ENCODE measurements at regions of chr22 and their contacts with region 1.

Region 1: DNA sequence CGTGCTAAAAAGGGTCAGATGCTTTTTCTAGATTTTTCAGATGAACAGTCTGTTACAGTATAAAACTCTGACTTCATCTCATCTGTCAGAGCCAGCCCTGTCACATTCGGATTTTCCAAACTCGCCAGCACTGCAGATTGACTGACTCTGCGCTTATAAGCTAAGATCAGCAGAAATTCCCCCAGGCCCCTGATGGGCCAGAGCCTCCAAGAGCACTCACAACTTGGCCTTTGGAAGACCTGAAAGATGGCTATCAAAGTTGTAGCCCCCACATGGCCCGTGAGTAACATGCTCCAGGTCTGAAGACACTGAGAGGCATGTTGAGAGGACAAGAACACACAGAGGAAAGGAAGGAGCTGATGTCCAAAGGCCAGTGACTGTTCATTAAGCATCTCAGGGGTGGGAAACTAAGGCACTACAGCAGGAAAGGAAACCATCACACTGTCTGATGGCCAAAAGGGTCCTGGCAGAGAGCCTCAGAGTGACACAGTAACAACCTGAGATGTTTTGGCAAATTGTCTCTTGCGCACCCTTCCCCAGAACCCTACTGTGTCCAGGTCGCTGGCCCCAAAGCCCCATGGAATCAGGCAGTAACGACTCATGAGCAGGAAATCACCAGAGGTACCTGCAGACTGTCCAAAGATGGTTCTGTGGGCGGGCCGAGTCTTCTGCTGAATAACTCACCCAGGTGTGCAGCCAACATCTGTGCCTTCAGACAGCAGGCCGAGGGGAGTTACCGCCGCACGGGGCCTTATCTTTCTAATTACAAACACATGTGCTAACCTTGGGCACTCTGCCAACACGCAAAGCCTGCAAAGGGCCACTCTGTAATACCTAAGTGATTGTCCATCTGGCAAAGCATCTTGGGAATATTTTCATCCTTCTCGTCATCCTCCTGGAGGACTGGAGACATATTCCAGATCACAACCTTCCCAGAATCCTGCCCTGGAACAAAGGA is 23.6 kb downstream of the HIRA start:
- DNase-seq: no peak
- H3K4me3 ChIP-seq: no peak overlapping the region
- H3K27ac ChIP-seq: no peak overlapping the region
- H3K4me1 ChIP-seq: no peaks in the 10 kb centered on the region
- H3K27me3 ChIP-seq: no peaks in the 10 kb centered on the region
- CTCF ChIP-seq: no peak

Region 2: GRCh38 chr22:19341500-19341899 is 66.4 kb before region 1 on chr22:
- CTCF ChIA-PET with region 1: no interaction called
- POLR2A ChIA-PET with region 1: no interaction called
- intact Hi-C with region 1: loop called (anchors 10 kb)
- DNase-seq: no peak
- H3K4me3 ChIP-seq: no peak overlapping the region
- H3K27ac ChIP-seq: no peak overlapping the region
- H3K4me1 ChIP-seq: no peaks in the 10 kb centered on the region
- H3K27me3 ChIP-seq: no peaks in the 10 kb centered on the region
- CTCF ChIP-seq: no peak

Measured in PC-9 (cell line).